ENCODE measurements at regions of chr10 and their contacts with region 1.

Region 1: DNA sequence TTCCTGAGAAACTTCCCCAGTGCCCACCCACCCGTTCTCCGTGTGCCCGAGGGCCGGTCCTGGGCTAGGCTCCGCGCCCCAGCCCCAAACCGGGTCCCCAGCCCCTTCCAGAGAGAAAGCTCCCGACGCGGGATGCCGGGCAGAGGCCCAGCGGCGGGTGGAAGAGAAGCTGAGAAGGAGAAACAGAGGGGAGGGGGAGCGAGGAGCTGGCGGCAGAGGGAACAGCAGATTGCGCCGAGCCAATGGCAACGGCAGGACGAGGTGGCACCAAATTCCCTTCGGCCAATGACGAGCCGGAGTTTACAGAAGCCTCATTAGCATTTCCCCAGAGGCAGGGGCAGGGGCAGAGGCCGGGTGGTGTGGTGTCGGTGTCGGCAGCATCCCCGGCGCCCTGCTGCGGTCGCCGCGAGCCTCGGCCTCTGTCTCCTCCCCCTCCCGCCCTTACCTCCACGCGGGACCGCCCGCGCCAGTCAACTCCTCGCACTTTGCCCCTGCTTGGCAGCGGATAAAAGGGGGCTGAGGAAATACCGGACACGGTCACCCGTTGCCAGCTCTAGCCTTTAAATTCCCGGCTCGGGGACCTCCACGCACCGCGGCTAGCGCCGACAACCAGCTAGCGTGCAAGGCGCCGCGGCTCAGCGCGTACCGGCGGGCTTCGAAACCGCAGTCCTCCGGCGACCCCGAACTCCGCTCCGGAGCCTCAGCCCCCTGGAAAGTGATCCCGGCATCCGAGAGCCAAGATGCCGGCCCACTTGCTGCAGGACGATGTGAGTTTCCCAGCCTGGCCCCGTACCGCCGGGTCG is at the start of gene SCD:
- DNase-seq: peak; percentile 91
- ATAC-seq: peak; percentile 75
- total RNA-seq, gene SCD: 53.6 TPM

Region 2: DNA sequence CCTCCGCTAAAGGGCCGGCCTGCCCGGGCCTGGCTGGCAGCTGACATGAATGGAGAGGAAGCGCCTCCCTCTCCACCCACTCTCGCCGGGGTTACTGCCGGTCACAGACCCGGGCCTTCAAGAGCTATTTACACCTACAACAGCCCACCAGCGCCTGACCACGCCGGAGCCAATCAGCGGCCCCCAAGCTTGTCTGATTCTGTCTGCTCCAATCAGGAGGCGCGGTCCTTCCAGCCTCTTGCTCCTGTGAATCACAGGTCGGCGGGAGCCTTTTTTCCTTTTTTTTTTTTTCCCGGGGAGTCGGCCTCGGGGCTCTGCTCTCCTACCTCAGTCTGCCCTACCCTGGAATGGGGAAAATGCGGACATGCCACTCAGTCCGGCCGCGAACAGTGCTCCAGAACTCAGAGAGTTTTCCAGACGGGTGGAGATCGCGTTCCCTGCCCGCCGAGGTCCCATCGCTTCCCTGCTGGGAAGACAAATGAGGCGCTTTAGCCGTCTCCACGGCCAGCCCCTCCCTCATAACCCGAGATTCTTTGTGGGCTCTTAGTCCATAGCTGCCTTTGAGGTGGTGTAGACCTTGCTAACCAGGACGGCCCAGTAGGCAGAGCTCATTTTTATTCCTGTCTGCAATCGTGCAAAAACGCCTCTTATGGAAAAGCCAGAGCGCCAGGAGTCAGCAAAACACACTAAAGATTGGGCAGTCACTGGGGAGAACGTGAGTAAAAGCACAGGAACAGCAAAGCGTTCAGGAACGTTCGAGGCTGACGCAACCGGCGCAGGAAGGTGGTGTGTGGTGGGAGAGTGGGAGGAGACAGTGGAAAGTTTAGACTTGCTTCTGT is 26.6 kb after region 1 on chr10:
- intact Hi-C with region 1: loop called (anchors 2 kb)
- DNase-seq: peak; percentile 98
- ATAC-seq: peak; percentile 97

Region 3: GRCh38 chr10:100403734-100404133 is 56.8 kb after region 1 on chr10:
- intact Hi-C with region 1: no loop called
- DNase-seq: no peak
- ATAC-seq: no peak

Region 4: GRCh38 chr10:100847440-100847839 is 500.5 kb after region 1 on chr10:
- intact Hi-C with region 1: no loop called
- DNase-seq: no peak
- ATAC-seq: no peak